ENCODE measurements at regions of chr9 and their contacts with region 1.

Region 1: DNA sequence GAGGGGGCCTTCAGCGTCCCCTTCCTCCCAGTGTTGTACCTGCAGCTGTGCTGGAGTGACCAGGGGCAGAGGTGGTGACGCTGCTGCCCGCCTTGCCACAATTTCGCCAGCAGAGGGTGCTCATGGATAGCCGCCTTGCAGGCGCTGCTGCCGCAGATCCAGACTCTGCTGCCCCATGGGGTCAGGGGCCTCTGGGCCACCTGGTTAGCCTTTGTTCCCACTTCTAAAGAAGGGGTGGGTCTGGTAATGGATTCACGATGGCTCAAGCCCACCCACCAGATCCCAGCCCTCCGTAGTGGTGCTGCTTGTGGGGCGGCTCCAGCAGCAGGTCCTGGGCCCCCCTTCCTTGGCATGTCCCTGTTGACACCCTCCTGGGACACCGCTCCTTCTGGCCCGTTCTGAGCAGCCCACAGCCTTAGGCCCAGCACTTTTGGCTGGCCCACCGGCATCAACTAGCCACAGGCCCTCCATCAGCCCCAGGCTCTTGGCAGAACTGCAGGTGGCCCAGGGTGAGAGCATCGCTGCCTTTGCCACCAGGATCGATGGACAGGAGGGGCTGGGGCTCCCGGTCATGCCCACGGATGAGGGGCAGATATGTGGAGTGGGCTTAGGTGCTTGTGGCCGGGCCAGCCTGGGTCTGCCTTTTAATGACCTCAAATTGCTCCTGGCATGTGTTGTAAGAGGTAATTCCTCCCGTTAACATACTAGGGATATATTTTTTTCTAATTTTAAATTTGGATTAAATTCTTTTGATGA is 57.2 kb downstream of the COL5A1 start:
- H3K4me3 Mint-ChIP-seq: no peak overlapping the region
- H3K27ac Mint-ChIP-seq: no peak overlapping the region
- H3K4me1 Mint-ChIP-seq: no peaks in the 10 kb centered on the region
- H3K27me3 Mint-ChIP-seq: peaks cover 27% of the 10 kb centered on the region

Region 2: GRCh38 chr9:134738869-134739659 is 40.3 kb after region 1 on chr9:
- intact Hi-C with region 1: loop called (anchors 1 kb)
- H3K4me3 Mint-ChIP-seq: no peak overlapping the region
- H3K27ac Mint-ChIP-seq: no peak overlapping the region
- H3K4me1 Mint-ChIP-seq: no peaks in the 10 kb centered on the region
- H3K27me3 Mint-ChIP-seq: peaks cover 30% of the 10 kb centered on the region

Region 3: DNA sequence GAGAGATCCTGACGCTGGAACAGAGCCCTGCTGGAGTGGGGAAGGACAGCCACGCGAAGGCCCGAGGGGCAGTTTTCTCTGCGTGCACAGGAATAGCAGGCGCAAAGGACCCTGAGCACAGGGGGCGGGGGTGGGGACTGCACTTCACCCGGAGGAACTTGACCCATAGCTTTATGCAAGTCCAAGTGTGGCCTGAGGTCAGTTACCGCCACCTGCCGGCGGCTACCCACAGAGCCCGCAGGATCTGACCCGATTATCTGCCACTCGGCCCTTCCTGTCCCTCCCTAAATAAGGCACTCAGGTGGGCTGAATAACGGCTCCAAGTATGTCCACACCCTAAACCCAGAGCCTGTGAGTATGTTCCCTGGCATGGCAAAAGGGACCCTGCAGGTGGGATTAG is 284.3 kb after region 1 on chr9:
- intact Hi-C with region 1: loop called (anchors 1 kb)
- H3K4me3 Mint-ChIP-seq: no peak overlapping the region
- H3K27ac Mint-ChIP-seq: no peak overlapping the region
- H3K4me1 Mint-ChIP-seq: peaks cover 32% of the 10 kb centered on the region
- H3K27me3 Mint-ChIP-seq: peaks cover 48% of the 10 kb centered on the region

Region 4: DNA sequence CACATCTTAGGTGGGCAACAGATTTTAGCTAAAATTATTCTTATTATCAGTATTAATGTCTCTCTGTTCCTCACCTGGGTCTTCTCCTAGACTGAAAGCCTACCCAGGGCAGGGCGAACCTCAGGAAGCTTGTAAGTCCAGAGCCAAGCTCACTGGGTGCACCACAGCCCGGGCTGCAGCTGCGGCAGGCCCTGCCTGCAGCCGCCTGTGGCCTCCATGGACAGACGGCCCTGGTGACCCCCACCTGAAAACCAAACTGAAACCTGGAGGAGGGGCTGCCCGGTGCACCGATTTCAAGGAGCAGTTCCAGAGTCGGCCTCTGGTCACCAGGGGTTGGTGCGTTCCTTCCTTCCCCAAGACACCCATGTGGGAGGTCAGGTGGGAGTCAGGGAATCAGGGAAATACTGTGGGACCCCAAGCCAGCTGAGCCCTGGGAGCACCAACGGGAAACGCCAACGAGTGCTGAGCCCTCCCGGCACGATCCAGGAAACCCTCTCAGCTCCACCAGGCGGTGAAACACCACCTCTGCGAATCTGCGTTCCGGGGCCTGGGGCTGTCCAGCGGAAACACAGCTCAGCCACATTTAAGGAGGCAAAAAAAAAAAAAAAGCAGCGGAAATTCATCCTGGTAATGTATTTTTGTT is 712.2 kb after region 1 on chr9:
- intact Hi-C with region 1: loop called (anchors 10 kb)
- H3K4me3 Mint-ChIP-seq: no peak overlapping the region
- H3K27ac Mint-ChIP-seq: no peak overlapping the region
- H3K4me1 Mint-ChIP-seq: peaks cover 6% of the 10 kb centered on the region
- H3K27me3 Mint-ChIP-seq: peaks cover 34% of the 10 kb centered on the region

Measured in dendritic cell treated with granulocyte-macrophage colony-stimulating factor and Interleukin-4, amounts not matched to agents 40 ng/mL and 50 ng/mL, for 4 days (primary cell).